ENCODE measurements at regions of chr6 and their contacts with region 1.

Region 1: DNA sequence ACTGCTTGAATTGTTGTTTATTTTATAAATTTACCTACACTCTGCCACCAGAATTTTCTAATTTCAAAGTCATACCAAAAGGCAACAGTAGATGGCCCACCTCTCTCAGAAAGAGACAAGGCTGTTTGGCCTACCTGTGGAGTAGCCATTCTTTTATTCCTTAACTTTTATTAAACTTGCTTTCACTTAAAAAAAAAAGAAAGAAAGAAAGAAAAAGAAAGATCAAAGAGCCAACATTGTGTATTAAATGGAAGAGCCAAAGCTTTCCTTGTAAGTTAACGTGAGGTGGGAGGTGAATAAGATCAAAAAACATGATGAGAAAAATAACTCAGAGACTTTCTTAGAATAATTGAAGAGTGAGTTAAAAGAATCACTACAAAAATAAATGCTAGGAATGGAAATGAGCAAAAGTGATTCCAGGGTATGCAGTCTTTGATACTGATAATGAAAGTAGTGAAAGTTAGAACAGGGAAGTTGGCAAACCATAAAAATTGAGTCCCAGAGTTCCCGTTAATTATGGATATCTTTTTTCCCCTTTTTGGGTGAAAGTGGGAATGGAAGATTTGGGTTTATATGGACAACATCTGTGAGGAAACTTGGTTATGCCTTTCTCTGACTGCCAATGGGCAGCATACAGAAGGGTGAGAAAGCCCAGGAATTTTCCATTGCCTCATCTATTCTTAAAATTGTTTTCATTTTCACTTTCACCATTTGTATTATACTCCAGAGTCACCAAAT is 35.9 kb upstream of the MYB start:
- DNase-seq: peak; percentile 58
- ATAC-seq: no peak
- H3K4me3 ChIP-seq: no peak overlapping the region
- H3K27ac ChIP-seq: no peak overlapping the region
- H3K4me1 ChIP-seq: 0 out of 2 replicates have a peak, but pooled peaks cover 6% of the 10 kb centered on the region
- H3K27me3 ChIP-seq: no peaks in the 10 kb centered on the region
- CTCF ChIP-seq: peak; percentile 69

Region 2: DNA sequence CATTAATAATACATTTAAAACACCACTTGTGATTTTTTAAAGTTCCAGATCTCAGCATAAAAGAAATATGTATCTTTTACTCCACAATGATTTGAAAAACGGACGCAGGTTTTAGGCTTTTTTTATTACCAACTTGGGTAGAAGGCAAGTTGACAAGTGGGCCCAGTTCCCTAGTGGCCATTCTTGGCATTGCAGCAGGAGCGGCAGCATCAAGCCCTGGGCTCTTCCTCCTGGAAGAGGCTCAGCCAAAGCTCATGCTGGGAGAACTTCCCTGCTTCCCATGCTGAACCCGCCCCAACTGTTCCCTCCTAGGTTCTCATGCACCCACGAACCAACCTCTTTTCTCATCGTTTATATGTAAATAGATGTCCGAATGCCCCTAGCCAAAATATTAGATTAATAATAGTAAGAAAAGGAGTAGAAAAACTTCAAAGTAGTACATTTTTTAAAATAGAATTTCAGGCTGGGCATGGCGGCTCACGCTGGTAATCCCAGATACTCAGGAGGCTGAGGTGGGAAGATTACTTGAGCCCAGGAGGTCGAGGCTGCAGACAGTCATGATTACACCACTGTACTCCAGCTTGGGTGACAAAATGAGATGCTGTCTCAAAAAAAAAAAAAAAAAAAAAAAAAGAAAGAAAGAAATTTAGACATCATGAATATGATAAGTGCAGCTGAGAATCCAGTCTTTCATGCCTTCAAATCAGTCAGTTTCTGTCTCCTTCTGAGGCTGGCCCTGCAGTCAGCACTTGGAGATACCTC is 17.6 kb after region 1 on chr6:
- CTCF ChIA-PET with region 1: no interaction called
- POLR2A ChIA-PET with region 1: no interaction called
- intact Hi-C with region 1: no loop called
- DNase-seq: peak; percentile 55
- ATAC-seq: peak; percentile 35; the same call in 1 of the 2 replicates
- H3K4me3 ChIP-seq: no peak overlapping the region
- H3K27ac ChIP-seq: no peak overlapping the region
- H3K4me1 ChIP-seq: no peaks in the 10 kb centered on the region
- H3K27me3 ChIP-seq: no peaks in the 10 kb centered on the region
- CTCF ChIP-seq: peak; percentile 66

Region 3: DNA sequence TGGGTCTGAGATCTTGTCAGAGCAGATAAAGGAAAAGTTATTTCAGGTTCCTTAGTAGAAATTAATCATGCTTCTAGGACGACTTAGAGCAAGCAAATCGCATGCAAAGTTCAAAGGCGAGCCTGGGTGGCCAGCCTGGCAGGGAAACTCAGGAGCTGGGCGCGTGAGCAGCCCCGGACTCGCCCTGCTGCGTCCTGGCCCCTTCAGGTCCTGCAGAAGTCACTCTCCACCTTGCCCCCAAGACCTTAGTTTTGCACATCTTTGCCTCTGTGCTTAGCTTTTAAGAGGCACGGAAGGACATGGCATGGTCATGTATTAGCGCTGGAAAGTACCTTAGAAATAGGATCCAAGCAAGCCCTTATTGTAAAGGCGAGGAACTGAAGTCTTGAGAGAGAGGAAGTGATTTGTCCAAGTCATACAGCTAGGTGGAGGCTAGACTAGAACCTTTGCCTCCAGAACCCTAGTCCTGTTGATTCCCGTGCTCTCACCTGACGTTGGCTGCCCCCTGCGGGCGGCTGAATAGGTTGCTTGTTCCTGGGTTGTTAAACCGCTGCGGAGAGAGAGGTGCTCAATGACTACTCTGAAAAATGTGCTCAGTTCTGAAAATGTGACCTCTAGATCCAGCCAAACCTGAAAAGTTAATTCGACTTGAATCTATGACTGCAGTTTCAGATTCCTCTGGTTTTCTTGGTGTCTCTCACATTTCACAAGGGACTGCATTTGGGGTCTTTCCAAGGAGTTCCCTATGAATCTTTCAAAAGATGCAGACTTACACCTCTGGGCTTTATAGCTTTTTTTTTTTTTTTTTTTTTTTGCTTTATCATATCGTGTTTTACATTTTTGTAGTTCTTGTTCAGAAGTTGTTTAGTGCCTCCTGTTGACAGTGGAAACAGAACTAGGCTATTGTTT is 38.6 kb after region 1 on chr6:
- CTCF ChIA-PET with region 1: interaction called, 8 read pairs
- POLR2A ChIA-PET with region 1: no interaction called
- intact Hi-C with region 1: loop called (anchors 1 kb)
- DNase-seq: peak; percentile 77
- ATAC-seq: peak; percentile 51
- H3K4me3 ChIP-seq: peak overlapping the region; percentile 78
- H3K27ac ChIP-seq: no peak overlapping the region
- H3K4me1 ChIP-seq: no peaks in the 10 kb centered on the region
- H3K27me3 ChIP-seq: no peaks in the 10 kb centered on the region
- CTCF ChIP-seq: peak; percentile 73

Region 4: GRCh38 chr6:135423649-135424128 is 278.5 kb after region 1 on chr6:
- CTCF ChIA-PET with region 1: no interaction called
- POLR2A ChIA-PET with region 1: no interaction called
- intact Hi-C with region 1: loop called (anchors 1 kb)
- DNase-seq: peak; percentile 57
- ATAC-seq: peak; percentile 67
- H3K4me3 ChIP-seq: no peak overlapping the region
- H3K27ac ChIP-seq: no peak overlapping the region
- H3K4me1 ChIP-seq: no peaks in the 10 kb centered on the region
- H3K27me3 ChIP-seq: no peaks in the 10 kb centered on the region
- CTCF ChIP-seq: peak; percentile 74

Region 5: GRCh38 chr6:135438907-135439535 is 293.8 kb after region 1 on chr6:
- CTCF ChIA-PET with region 1: interaction called, 3 read pairs
- POLR2A ChIA-PET with region 1: no interaction called
- intact Hi-C with region 1: loop called (anchors 5 kb)
- DNase-seq: peak; percentile 74
- ATAC-seq: peak; percentile 71
- H3K4me3 ChIP-seq: no peak overlapping the region
- H3K27ac ChIP-seq: no peak overlapping the region
- H3K4me1 ChIP-seq: no peaks in the 10 kb centered on the region
- H3K27me3 ChIP-seq: no peaks in the 10 kb centered on the region
- CTCF ChIP-seq: peak; percentile 66

Region 6: GRCh38 chr6:135710042-135710441 is 564.8 kb after region 1 on chr6:
- CTCF ChIA-PET with region 1: no interaction called
- POLR2A ChIA-PET with region 1: no interaction called
- intact Hi-C with region 1: no loop called
- DNase-seq: no peak
- ATAC-seq: no peak
- H3K4me3 ChIP-seq: no peak overlapping the region
- H3K27ac ChIP-seq: no peak overlapping the region
- H3K4me1 ChIP-seq: no peaks in the 10 kb centered on the region
- H3K27me3 ChIP-seq: no peaks in the 10 kb centered on the region
- CTCF ChIP-seq: no peak

Measured in PC-3 (cell line).